CD4-positive, alpha-beta memory T cell (primary cell): ENCODE measurements at regions of chr14 and their contacts with region 1.

Region 1: DNA sequence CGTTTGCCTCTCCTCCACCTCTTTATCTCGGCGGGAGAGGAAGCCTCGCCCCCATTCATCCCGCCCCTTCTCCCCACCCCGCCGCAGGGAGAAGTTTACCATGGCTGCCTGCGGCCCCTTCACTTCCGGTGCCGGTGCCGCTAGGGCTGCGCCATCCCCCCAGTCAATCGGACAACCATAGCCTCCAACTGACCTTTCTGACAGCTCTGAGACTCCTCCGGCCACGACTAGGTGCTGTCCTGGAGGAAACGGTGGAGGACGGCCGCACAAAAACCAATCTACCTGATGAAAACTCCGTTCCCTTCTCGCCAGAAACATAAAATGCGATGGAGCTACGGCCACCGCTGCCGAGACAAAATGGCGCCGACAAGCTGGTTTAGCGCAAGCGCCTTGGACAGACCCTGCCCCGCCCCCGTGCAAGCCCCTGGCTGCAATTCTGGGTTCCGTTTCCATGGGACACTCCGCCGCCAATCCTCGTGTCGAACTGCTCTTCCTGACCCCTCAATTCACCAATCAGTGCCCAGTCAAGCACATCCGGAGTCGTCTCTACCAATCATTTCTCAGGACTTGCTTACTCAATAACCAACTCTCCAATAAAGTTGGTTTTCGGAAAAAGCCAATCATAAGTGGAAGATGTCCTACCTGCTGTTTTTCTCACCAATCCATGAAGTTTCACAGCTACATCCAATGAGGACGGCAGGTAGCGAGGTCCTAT is 436 bp upstream of the ARID4A start:
- DNase-seq: peak; percentile 98 to 100 (median 99)
- H3K4me3 ChIP-seq: peak overlapping the region; percentile 76 to 96
- H3K4me3 Mint-ChIP-seq: no peak overlapping the region
- H3K27ac ChIP-seq: peak overlapping the region; percentile 94
- H3K27ac Mint-ChIP-seq: no peak overlapping the region
- H3K4me1 ChIP-seq: peaks cover 58% of the 10 kb centered on the region
- H3K4me1 Mint-ChIP-seq: peaks cover 26 to 66% (median 30%) of the 10 kb centered on the region in 4 donors
- H3K27me3 ChIP-seq: no peaks in the 10 kb centered on the region
- H3K27me3 Mint-ChIP-seq: no peaks in the 10 kb centered on the region

Region 2: GRCh38 chr14:58239244-58240195 is 58.4 kb before region 1 on chr14:
- CTCF ChIA-PET with region 1: interaction called, 3 read pairs
- POLR2A ChIA-PET with region 1: interaction called, 91 read pairs
- intact Hi-C with region 1: loop called (anchors 1 kb)
- DNase-seq: peak; percentile 84 to 88 (median 87)
- H3K4me3 ChIP-seq: peak overlapping the region; percentile 82 to 84
- H3K4me3 Mint-ChIP-seq: no peak overlapping the region
- H3K27ac ChIP-seq: peak overlapping the region; percentile 57
- H3K27ac Mint-ChIP-seq: no peak overlapping the region
- H3K4me1 ChIP-seq: peaks cover 11% of the 10 kb centered on the region
- H3K4me1 Mint-ChIP-seq: peaks cover 17 to 23% (median 20%) of the 10 kb centered on the region in 4 donors
- H3K27me3 ChIP-seq: no peaks in the 10 kb centered on the region
- H3K27me3 Mint-ChIP-seq: peaks cover 0 to 2% of the 10 kb centered on the region in 2 donors

Region 3: GRCh38 chr14:58258156-58258555 is 39.8 kb before region 1 on chr14:
- CTCF ChIA-PET with region 1: no interaction called
- POLR2A ChIA-PET with region 1: interaction called, 19 read pairs
- intact Hi-C with region 1: no loop called
- DNase-seq: no peak
- H3K4me3 ChIP-seq: no peak overlapping the region
- H3K4me3 Mint-ChIP-seq: no peak overlapping the region
- H3K27ac ChIP-seq: no peak overlapping the region
- H3K27ac Mint-ChIP-seq: peak overlapping the region in 4 of 7 donors; percentile 6 to 59 (median 32)
- H3K4me1 ChIP-seq: no peaks in the 10 kb centered on the region
- H3K4me1 Mint-ChIP-seq: peaks cover 9 to 20% (median 11%) of the 10 kb centered on the region in 4 donors
- H3K27me3 ChIP-seq: no peaks in the 10 kb centered on the region
- H3K27me3 Mint-ChIP-seq: no peaks in the 10 kb centered on the region

Region 4: GRCh38 chr14:58272588-58273372 is 25.1 kb before region 1 on chr14:
- CTCF ChIA-PET with region 1: no interaction called
- POLR2A ChIA-PET with region 1: interaction called, 46 read pairs
- intact Hi-C with region 1: no loop called
- DNase-seq: no peak
- H3K4me3 ChIP-seq: no peak overlapping the region
- H3K4me3 Mint-ChIP-seq: no peak overlapping the region
- H3K27ac ChIP-seq: no peak overlapping the region
- H3K27ac Mint-ChIP-seq: peak overlapping the region in 3 of 7 donors; percentile 12 to 36 (median 36)
- H3K4me1 ChIP-seq: peaks cover 45% of the 10 kb centered on the region
- H3K4me1 Mint-ChIP-seq: peaks cover 24 to 54% (median 30%) of the 10 kb centered on the region in 4 donors
- H3K27me3 ChIP-seq: no peaks in the 10 kb centered on the region
- H3K27me3 Mint-ChIP-seq: no peaks in the 10 kb centered on the region

Region 5: DNA sequence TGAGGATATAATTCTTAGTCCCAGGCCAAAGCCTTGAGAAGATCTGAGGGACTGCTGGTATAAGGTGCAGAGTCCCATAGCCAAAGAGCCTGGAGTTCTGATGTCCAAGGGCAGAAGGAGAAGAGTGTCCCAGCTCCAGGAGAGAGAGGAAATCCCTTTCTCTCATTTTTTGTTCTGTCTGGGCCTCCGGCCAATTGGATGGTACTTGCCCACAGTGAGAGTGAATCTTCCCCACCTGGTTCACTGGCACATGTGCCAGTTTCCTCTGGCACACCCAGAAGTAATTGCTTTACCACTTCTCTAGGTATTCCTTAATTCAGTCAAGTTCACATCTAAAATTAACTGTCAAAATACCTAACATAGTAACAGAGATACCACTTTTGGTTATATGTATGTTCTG is 15.8 kb after region 1 on chr14:
- CTCF ChIA-PET with region 1: interaction called, 6 read pairs
- POLR2A ChIA-PET with region 1: interaction called, 15 read pairs
- intact Hi-C with region 1: no loop called
- DNase-seq: no peak
- H3K4me3 ChIP-seq: no peak overlapping the region
- H3K4me3 Mint-ChIP-seq: no peak overlapping the region
- H3K27ac ChIP-seq: no peak overlapping the region
- H3K27ac Mint-ChIP-seq: peak overlapping the region in 3 of 7 donors; percentile 42 to 57 (median 46)
- H3K4me1 ChIP-seq: peaks cover 5% of the 10 kb centered on the region
- H3K4me1 Mint-ChIP-seq: peaks cover 6 to 19% (median 10%) of the 10 kb centered on the region in 4 donors
- H3K27me3 ChIP-seq: no peaks in the 10 kb centered on the region
- H3K27me3 Mint-ChIP-seq: no peaks in the 10 kb centered on the region

Region 6: DNA sequence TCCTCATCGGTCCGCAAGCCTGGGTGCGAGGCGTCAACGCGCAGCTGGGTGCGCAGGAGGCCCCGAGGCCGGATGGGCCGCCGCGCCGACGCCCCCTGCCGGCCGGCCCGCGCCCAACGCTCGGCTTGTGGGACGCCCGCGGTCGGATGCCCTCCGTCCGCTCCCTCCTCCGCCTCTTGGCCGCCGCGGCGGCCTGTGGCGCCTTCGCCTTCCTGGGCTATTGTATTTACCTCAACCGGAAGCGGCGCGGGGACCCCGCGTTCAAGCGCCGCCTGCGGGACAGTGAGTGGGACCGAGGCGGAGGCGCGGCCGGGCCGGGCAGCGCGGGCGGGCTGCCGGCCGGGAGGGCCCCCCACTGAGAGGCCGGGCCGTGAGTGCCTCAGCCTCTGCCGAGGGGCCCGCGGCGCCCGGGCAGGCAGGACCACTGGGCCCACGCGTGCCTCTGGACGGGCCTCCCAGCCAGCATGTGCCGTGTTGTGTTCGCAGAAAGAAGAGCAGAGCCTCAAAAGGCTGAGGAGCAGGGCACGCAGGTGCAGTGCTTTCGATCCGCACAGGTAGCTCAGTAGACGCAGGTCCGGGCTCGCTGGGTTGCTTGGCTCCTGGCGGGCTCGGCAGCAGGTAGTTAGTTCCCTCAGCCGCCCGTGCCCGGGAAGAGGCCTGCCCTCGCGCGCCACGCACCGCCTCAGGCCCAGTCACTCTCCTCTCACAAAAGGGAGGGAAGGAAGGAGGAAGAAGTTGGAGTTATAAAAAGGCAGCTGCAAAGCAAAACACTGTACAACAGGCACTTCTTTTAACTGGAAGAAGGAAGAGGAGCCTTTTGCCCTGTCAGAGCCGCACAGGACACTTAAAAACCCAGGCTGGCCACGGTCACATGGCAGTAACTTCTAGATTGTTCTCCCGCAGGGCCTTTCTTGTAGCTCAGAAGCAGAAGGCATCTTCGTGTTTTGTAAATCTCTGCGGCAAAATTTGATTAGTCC is 98.2 kb after region 1 on chr14 and contains the start of gene TOMM20L:
- CTCF ChIA-PET with region 1: interaction called, 5 read pairs
- POLR2A ChIA-PET with region 1: interaction called, 24 read pairs
- intact Hi-C with region 1: no loop called
- DNase-seq: peak; percentile 70 to 81 (median 72)
- H3K4me3 ChIP-seq: peak within 1 kb of the TSS; percentile 24 to 48
- H3K4me3 Mint-ChIP-seq: peak within 1 kb of the TSS; percentile 83 to 91 (median 88)
- H3K27ac ChIP-seq: peak within 1 kb of the TSS; percentile 56
- H3K27ac Mint-ChIP-seq: peak within 1 kb of the TSS; percentile 88 to 95 (median 93)
- H3K4me1 ChIP-seq: peaks cover 12% of the 10 kb centered on the region
- H3K4me1 Mint-ChIP-seq: peaks cover 7 to 21% (median 10%) of the 10 kb centered on the region in 4 donors
- H3K27me3 ChIP-seq: no peaks in the 10 kb centered on the region
- H3K27me3 Mint-ChIP-seq: no peaks in the 10 kb centered on the region
- total RNA-seq, gene TOMM20L: not detected